Adrenal gland (tissue), 19 donors: ENCODE measurements at regions of chr13 and their contacts with region 1.

Region 1: GRCh38 chr13:89695343-89696257 is 1651.9 kb upstream of the MIR17HG start:
- DNase-seq: peak; percentile 18 to 76 (median 59)
- H3K4me3 ChIP-seq: no peak overlapping the region
- H3K27ac ChIP-seq: no peak overlapping the region
- H3K4me1 ChIP-seq: no peaks in the 10 kb centered on the region
- H3K27me3 ChIP-seq: no peaks in the 10 kb centered on the region
- CTCF ChIP-seq: peak; percentile 37 to 89 (median 83)
- POLR2A ChIP-seq: no peak

Region 2: DNA sequence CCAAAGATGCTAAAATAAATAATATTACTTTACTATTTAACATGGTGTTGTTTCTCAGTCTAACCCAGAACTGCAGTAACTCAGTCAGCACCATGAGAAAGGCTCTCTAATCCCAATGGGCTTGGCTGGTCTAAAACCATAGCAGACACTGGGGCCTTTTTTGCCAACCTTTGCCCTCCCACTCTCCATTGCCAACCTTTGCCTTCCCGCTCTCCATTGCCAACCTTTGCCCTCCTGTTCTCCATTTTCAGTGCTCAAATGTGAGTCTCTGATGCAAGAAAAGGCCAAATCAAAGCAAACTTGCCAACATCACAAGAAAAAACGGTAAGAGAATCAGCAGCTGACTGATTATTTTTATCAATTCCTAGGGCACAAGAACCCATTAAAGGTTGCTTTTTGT is 343.2 kb before region 1 on chr13:
- intact Hi-C with region 1: loop called in 1 of 2 experiments (anchors 10 kb)
- DNase-seq: no peak
- H3K4me3 ChIP-seq: no peak overlapping the region
- H3K27ac ChIP-seq: no peak overlapping the region
- H3K4me1 ChIP-seq: no peaks in the 10 kb centered on the region
- H3K27me3 ChIP-seq: no peaks in the 10 kb centered on the region
- CTCF ChIP-seq: no peak
- POLR2A ChIP-seq: no peak

Region 3: DNA sequence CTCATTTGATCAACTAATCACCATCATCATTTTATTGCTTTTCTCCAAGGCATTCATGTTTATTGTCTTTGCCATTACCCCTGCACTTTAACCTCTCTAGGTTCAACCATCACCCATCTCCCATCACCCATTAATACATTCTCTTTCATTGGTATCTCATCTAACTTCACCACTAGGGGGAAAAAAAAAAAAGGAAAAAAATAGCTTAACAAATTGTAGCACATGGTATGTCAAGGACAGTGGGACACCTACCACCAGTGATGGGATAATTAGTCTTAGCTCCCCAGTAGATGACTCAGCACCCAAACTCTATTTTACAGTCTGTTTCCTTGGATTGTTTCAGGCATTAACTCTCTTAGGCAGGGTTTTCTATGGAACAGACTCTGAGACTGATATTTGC is 118.3 kb before region 1 on chr13:
- intact Hi-C with region 1: no loop called
- DNase-seq: no peak
- H3K4me3 ChIP-seq: no peak overlapping the region
- H3K27ac ChIP-seq: no peak overlapping the region
- H3K4me1 ChIP-seq: peaks cover 0 to 6% of the 10 kb centered on the region in 2 donors
- H3K27me3 ChIP-seq: no peaks in the 10 kb centered on the region
- CTCF ChIP-seq: peak in 1 of 6 experiments; percentile 11
- POLR2A ChIP-seq: no peak

Region 4: GRCh38 chr13:89951341-89951740 is 255.7 kb after region 1 on chr13:
- intact Hi-C with region 1: no loop called
- DNase-seq: no peak
- H3K4me3 ChIP-seq: no peak overlapping the region
- H3K27ac ChIP-seq: no peak overlapping the region
- H3K4me1 ChIP-seq: no peaks in the 10 kb centered on the region
- H3K27me3 ChIP-seq: no peaks in the 10 kb centered on the region
- CTCF ChIP-seq: no peak
- POLR2A ChIP-seq: no peak